Gastrocnemius medialis (tissue), 4 donors: ENCODE measurements at regions of chr9 and their contacts with region 1.

Region 1: DNA sequence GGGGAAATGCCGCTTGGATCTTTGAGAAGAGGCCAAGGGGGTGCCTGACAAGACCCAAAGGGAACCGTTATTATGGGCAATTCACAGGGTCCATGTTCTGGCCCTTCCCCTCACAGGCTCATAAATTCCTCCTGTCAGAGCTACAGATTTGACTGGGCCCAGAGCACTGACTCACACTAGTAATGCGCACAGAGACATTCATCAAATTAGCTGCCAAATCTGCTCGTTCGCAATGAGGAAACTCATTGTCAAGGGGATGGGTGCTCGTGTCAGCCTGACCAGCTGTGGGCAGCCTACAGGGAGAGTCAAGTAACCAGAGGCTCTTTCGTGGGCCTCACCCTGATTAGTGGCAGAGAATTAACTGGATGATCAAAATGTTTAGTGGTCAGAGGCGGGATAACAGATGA is 377.4 kb downstream of the ACTL7B start:
- DNase-seq: peak; percentile 60 to 71
- ATAC-seq: peak; percentile 72 to 79
- H3K4me3 ChIP-seq: no peak overlapping the region
- H3K27ac ChIP-seq: peak overlapping the region; percentile 75 to 90 (median 84)
- H3K4me1 ChIP-seq: peaks cover 37 to 60% of the 10 kb centered on the region in 2 donors
- H3K27me3 ChIP-seq: no peaks in the 10 kb centered on the region
- CTCF ChIP-seq: peak in 2 of 5 experiments; percentile 30 to 33
- POLR2A ChIP-seq: no peak

Region 2: GRCh38 chr9:108311745-108312144 is 166.7 kb before region 1 on chr9:
- in situ Hi-C with region 1: no loop called
- intact Hi-C with region 1: no loop called
- DNase-seq: no peak
- ATAC-seq: no peak
- H3K4me3 ChIP-seq: no peak overlapping the region
- H3K27ac ChIP-seq: no peak overlapping the region
- H3K4me1 ChIP-seq: no peaks in the 10 kb centered on the region
- H3K27me3 ChIP-seq: no peaks in the 10 kb centered on the region
- CTCF ChIP-seq: no peak
- POLR2A ChIP-seq: no peak

Region 3: DNA sequence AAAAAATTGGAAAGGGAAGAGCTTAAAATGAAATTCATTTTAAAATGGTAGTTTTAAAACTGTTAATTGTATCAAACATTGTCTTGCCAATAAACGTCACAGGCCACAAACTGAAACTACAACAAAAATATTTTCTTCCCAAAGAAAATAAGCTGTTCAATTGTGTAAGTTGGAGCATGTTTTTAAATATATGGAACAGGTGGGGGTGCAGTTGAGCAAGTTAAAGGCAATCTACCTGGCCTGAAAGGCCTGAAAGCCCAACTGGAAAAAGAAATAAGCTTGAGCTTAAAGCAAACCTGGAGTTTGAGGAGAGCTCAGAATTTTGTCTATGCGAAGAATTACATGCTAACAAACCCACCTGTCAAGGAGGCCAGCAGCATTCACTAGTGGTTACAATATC is 62.1 kb before region 1 on chr9:
- in situ Hi-C with region 1: no loop called
- intact Hi-C with region 1: loop called (anchors 5 kb)
- DNase-seq: no peak
- ATAC-seq: no peak
- H3K4me3 ChIP-seq: no peak overlapping the region
- H3K27ac ChIP-seq: no peak overlapping the region
- H3K4me1 ChIP-seq: peaks cover 0 to 5% of the 10 kb centered on the region in 2 donors
- H3K27me3 ChIP-seq: no peaks in the 10 kb centered on the region
- CTCF ChIP-seq: peak in 1 of 5 experiments; percentile 15
- POLR2A ChIP-seq: no peak

Region 4: GRCh38 chr9:108551030-108551838 is 72.8 kb after region 1 on chr9:
- in situ Hi-C with region 1: loop called in 2 of 4 experiments (anchors 5 to 25 kb)
- intact Hi-C with region 1: loop called (anchors 5 kb)
- DNase-seq: peak; percentile 63 to 74
- ATAC-seq: peak; percentile 96 to 98
- H3K4me3 ChIP-seq: peak overlapping the region in 1 of 4 donors; percentile 35
- H3K27ac ChIP-seq: peak overlapping the region; percentile 76 to 89 (median 76)
- H3K4me1 ChIP-seq: peaks cover 20 to 47% of the 10 kb centered on the region in 2 donors
- H3K27me3 ChIP-seq: no peaks in the 10 kb centered on the region
- CTCF ChIP-seq: no peak
- POLR2A ChIP-seq: no peak

Region 5: GRCh38 chr9:108621991-108622855 is 143.8 kb after region 1 on chr9:
- in situ Hi-C with region 1: no loop called
- intact Hi-C with region 1: no loop called
- DNase-seq: no peak
- ATAC-seq: no peak
- H3K4me3 ChIP-seq: no peak overlapping the region
- H3K27ac ChIP-seq: no peak overlapping the region
- H3K4me1 ChIP-seq: no peaks in the 10 kb centered on the region
- H3K27me3 ChIP-seq: no peaks in the 10 kb centered on the region
- CTCF ChIP-seq: no peak
- POLR2A ChIP-seq: no peak

Region 6: GRCh38 chr9:108800632-108801099 is 322.2 kb after region 1 on chr9:
- in situ Hi-C with region 1: no loop called
- intact Hi-C with region 1: loop called (anchors 2 kb)
- DNase-seq: peak; percentile 38 to 74
- ATAC-seq: peak; percentile 95 to 97
- H3K4me3 ChIP-seq: no peak overlapping the region
- H3K27ac ChIP-seq: peak overlapping the region in 3 of 4 donors; percentile 36 to 56 (median 51)
- H3K4me1 ChIP-seq: peaks cover 7 to 12% of the 10 kb centered on the region in 2 donors
- H3K27me3 ChIP-seq: no peaks in the 10 kb centered on the region
- CTCF ChIP-seq: no peak
- POLR2A ChIP-seq: no peak